Lower leg skin (tissue), 4 donors: ENCODE measurements at regions of chr1 and their contacts with region 1.

Region 1: GRCh38 chr1:8987881-8988617 is 38.2 kb downstream of the SLC2A7 start:
- DNase-seq: peak in 1 of 2 donors; percentile 90
- H3K4me3 ChIP-seq: no peak overlapping the region
- CTCF ChIP-seq: peak in 1 of 3 donors; percentile 54
- POLR2A ChIP-seq: no peak

Region 2: GRCh38 chr1:8858888-8859706 is 129.0 kb before region 1 on chr1:
- intact Hi-C with region 1: loop called (anchors 10 kb)
- DNase-seq: no peak
- H3K4me3 ChIP-seq: no peak overlapping the region
- CTCF ChIP-seq: no peak
- POLR2A ChIP-seq: no peak

Region 3: GRCh38 chr1:8910914-8911313 is 77.1 kb before region 1 on chr1:
- intact Hi-C with region 1: loop called (anchors 5 kb)
- DNase-seq: no peak
- H3K4me3 ChIP-seq: no peak overlapping the region
- CTCF ChIP-seq: no peak
- POLR2A ChIP-seq: no peak